Left cardiac atrium (tissue), 4 donors: ENCODE measurements at regions of chr18 and their contacts with region 1.

Region 1: DNA sequence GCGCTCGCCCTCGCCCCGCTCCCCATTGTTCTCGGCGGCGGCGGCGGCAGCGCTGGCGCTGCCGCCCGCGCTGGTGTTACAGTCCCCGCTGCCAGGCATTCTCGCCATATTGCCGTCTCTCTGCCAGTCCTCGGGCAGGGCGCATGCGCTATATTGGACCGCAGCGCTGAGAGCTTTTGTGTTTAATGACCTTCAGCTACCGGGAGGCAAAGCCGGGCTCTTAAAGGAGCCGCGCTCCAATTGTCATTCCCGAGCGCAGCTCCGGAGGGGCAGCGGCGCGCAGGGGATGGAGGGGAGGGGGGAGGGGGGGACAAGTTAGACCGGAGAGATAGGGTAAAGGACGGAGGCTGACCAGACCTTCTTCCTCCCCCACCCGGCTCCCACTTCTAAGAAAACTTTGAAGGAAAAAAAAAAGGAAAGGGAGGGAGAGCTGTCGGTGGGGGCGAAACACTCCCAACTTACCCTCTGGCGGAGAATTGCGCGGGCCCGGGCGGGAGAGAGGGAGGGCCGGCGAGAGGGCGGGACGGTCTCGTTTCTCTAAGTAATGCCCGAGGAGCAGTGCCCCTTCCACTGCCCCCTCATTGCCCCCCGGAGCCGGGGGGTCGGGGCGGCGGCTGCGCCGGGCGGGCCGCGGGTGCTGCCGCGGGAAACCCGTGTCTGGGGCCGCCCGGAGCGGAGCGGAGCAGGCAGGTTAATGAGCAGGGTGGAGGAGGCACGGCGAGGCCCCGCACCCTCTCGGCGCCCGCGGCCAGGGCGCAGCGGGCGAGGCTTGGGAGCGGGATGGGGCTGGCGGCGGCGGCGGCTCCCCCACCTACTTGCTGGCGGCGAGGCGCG is at the start of gene KCTD1:
- DNase-seq: peak; percentile 89
- ATAC-seq: peak; percentile 58 to 69
- total RNA-seq, gene KCTD1: 35.6 to 42.2 TPM

Region 2: GRCh38 chr18:26458526-26459232 is 90.0 kb before region 1 on chr18:
- intact Hi-C with region 1: loop called in 1 of 2 experiments (anchors 5 kb)
- DNase-seq: no peak
- ATAC-seq: no peak

Region 3: GRCh38 chr18:26504831-26505230 is 43.8 kb before region 1 on chr18:
- intact Hi-C with region 1: loop called in 1 of 2 experiments (anchors 5 kb)
- DNase-seq: no peak
- ATAC-seq: peak in 1 of 2 donors; percentile 18